ENCODE measurements at regions of chrX and their contacts with region 1.

Region 1: GRCh38 chrX:81054904-81055303 is 146.8 kb downstream of the HMGN5 start:
- DNase-seq: no peak
- ATAC-seq: no peak
- H3K4me3 ChIP-seq: no peak overlapping the region
- H3K27ac ChIP-seq: no peak overlapping the region
- H3K4me1 ChIP-seq: no peaks in the 10 kb centered on the region
- H3K27me3 ChIP-seq: no peaks in the 10 kb centered on the region
- CTCF ChIP-seq: no peak
- POLR2A ChIP-seq: no peak

Region 2: DNA sequence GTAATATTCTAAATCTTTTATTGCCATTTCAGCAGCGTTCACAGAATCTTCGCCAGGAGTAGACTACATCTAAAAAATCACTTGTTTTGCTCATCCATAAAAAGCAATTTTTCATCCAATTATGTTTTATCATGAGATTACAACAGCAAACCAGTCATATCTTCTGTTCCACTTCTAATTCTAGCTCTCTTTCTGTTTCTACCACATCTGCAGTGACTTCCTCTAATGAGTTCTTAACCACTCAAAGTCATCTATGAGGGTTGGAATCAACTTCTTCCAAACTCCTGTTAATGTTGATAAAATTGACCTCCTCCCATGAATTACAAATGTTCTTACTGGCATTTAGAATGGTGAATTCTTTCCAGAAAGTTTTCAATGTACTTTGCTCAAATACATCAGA is 70.8 kb before region 1 on chrX:
- in situ Hi-C with region 1: no loop called
- intact Hi-C with region 1: no loop called
- DNase-seq: no peak
- ATAC-seq: no peak
- H3K4me3 ChIP-seq: no peak overlapping the region
- H3K27ac ChIP-seq: no peak overlapping the region
- H3K4me1 ChIP-seq: no peaks in the 10 kb centered on the region
- H3K27me3 ChIP-seq: no peaks in the 10 kb centered on the region
- CTCF ChIP-seq: no peak
- POLR2A ChIP-seq: no peak

Region 3: GRCh38 chrX:81174286-81174685 is 119.4 kb after region 1 on chrX:
- in situ Hi-C with region 1: loop called in 1 of 4 experiments (anchors 25 kb)
- intact Hi-C with region 1: no loop called
- DNase-seq: no peak
- ATAC-seq: no peak
- H3K4me3 ChIP-seq: no peak overlapping the region
- H3K27ac ChIP-seq: no peak overlapping the region
- H3K4me1 ChIP-seq: no peaks in the 10 kb centered on the region
- H3K27me3 ChIP-seq: no peaks in the 10 kb centered on the region
- CTCF ChIP-seq: no peak
- POLR2A ChIP-seq: no peak

Measured in gastrocnemius medialis (tissue), 4 donors.